Right lobe of liver (tissue), 6 donors: ENCODE measurements at regions of chr7 and their contacts with region 1.

Region 1: GRCh38 chr7:45663167-45663921 is 89.2 kb downstream of the ADCY1 start:
- DNase-seq: peak in 2 of 3 donors; percentile 58 to 59
- ATAC-seq: peak; percentile 85 to 94 (median 92)
- H3K4me3 ChIP-seq: no peak overlapping the region
- H3K27ac ChIP-seq: no peak overlapping the region
- H3K4me1 ChIP-seq: no peaks in the 10 kb centered on the region
- H3K27me3 ChIP-seq: no peaks in the 10 kb centered on the region
- CTCF ChIP-seq: peak; percentile 73 to 92 (median 83)
- POLR2A ChIP-seq: no peak

Region 2: DNA sequence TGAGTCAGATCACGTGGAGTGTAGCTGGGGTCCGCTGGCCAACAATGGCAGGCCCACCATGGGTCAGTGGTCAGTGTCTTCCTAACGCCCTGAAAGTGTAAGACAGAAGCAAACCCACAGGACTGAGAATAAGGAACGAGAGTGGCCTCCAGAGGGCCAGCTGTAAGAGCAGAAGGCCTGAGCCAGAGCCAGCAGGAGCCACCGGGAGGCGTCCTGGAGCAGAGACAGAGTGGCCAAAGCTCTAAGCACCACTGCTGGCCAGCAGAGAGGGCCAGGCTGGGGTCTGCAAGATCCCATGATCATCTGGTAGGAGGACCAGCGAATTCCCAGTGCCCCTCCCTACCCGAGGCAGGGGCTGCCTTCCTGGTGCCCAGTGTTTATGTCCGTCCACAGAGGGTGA is 200.4 kb after region 1 on chr7:
- intact Hi-C with region 1: loop called in 1 of 2 experiments (anchors 5 kb)
- DNase-seq: no peak
- ATAC-seq: no peak
- H3K4me3 ChIP-seq: no peak overlapping the region
- H3K27ac ChIP-seq: no peak overlapping the region
- H3K4me1 ChIP-seq: no peaks in the 10 kb centered on the region
- H3K27me3 ChIP-seq: no peaks in the 10 kb centered on the region
- CTCF ChIP-seq: no peak
- POLR2A ChIP-seq: no peak